CD4-positive, alpha-beta T cell (primary cell): ENCODE measurements at regions of chr16 and their contacts with region 1.

Region 1: DNA sequence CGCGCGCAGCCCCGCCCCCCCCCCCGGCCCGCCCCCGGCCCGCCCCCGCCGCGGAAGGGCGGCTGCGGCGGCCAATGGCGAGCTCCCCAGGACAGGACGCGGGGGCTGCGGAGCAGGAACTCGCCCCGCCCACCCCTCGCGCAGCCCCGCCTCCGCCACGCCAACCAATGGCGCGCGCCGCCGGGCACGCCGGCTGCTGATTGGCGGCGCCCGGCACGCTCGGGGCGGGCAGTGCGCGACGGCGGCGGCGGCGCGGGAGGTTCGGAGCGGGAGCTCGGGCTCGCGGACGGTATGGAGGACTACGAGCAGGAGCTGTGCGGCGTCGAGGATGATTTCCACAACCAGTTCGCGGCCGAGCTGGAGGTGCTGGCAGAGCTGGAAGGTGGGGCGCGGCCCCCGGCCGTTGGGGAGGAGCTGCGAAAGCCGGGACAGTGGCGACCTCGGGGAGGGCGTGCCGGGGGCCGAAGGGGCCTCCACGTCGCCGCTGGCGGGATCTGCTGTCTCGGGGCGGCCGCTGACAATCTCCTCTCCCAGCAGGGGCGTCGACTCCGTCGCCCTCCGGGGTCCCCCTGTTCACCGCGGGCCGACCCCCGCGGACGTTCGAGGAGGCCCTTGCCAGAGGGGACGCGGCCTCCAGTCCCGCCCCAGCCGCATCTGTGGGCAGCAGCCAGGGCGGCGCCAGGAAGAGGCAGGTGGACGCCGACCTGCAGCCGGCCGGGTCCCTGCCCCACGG is at the start of gene CHTF18:
- DNase-seq: peak; percentile 87 to 98 (median 94)
- ATAC-seq: peak; percentile 96
- H3K4me3 ChIP-seq: peak within 1 kb of the TSS; percentile 87
- H3K4me3 Mint-ChIP-seq: peak within 1 kb of the TSS; percentile 89
- H3K27ac ChIP-seq: peak within 1 kb of the TSS in 1 of 2 donors; percentile 35
- H3K27ac Mint-ChIP-seq: peak within 1 kb of the TSS; percentile 9
- H3K4me1 ChIP-seq: peaks cover 34% of the 10 kb centered on the region
- H3K4me1 Mint-ChIP-seq: no peaks in the 10 kb centered on the region
- H3K27me3 ChIP-seq: no peaks in the 10 kb centered on the region
- H3K27me3 Mint-ChIP-seq: no peaks in the 10 kb centered on the region
- CTCF ChIP-seq: no peak
- total RNA-seq, gene CHTF18: 30.7 to 31.1 TPM

Region 2: GRCh38 chr16:740764-741505 is 47.6 kb before region 1 on chr16 and contains the start of gene CIAO3:
- CTCF ChIA-PET with region 1: interaction called, 3 read pairs
- POLR2A ChIA-PET with region 1: interaction called, 7 read pairs
- intact Hi-C with region 1: loop called in 1 of 2 experiments (anchors 1 kb)
- DNase-seq: peak; percentile 83 to 96 (median 91)
- ATAC-seq: peak; percentile 94
- H3K4me3 ChIP-seq: peak within 1 kb of the TSS; percentile 88
- H3K4me3 Mint-ChIP-seq: peak within 1 kb of the TSS; percentile 83
- H3K27ac ChIP-seq: peak within 1 kb of the TSS; percentile 64 to 73
- H3K27ac Mint-ChIP-seq: peak within 1 kb of the TSS; percentile 62
- H3K4me1 ChIP-seq: peaks cover 20% of the 10 kb centered on the region
- H3K4me1 Mint-ChIP-seq: no peaks in the 10 kb centered on the region
- H3K27me3 ChIP-seq: no peaks in the 10 kb centered on the region
- H3K27me3 Mint-ChIP-seq: no peaks in the 10 kb centered on the region
- CTCF ChIP-seq: peak; percentile 97
- total RNA-seq, gene CIAO3: 33.3 to 38.2 TPM

Region 3: DNA sequence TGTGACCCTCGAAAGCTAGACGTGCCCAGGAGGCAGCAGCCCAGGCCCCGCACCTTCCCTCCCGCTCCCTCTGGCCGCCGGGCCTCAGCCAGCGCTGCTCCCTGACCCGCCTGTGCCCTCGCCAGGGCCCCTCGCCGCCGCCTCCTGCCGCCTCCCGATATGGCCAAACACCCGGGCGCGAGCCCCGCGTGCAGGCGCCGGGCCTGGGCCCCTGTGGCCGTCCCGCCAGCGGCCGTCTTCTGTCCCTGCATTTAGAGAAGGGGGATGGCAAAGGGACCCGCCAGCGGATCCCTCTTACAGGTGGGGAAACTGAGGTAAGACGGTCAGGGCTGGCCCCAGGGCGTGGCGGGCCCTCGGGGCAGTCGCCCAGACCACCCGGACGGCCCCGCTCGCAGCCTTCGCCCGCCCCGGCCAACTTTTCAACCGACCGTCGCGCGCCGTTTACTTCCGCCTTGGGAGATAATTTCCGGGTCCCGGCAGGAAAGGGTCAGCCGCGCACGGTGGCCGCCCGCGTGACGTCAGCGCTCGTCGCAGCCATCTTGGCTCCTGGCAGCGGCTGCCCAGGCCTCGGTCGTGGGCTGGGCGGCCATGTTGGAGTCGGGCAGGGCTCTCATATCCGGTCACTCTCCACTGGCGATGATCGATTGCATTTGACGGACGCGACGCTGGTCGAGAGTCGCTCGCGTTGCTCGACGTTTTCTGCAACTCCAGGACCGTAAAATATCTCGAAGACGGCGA is 19.0 kb after region 1 on chr16:
- CTCF ChIA-PET with region 1: no interaction called
- POLR2A ChIA-PET with region 1: interaction called, 14 read pairs
- intact Hi-C with region 1: loop called in 1 of 2 experiments (anchors 1 kb)
- DNase-seq: peak; percentile 58 to 92 (median 77)
- ATAC-seq: peak; percentile 83
- H3K4me3 ChIP-seq: peak overlapping the region; percentile 75
- H3K4me3 Mint-ChIP-seq: peak overlapping the region; percentile 95
- H3K27ac ChIP-seq: peak overlapping the region; percentile 72 to 87
- H3K27ac Mint-ChIP-seq: peak overlapping the region; percentile 92
- H3K4me1 ChIP-seq: peaks cover 21% of the 10 kb centered on the region
- H3K4me1 Mint-ChIP-seq: peaks cover 15% of the 10 kb centered on the region
- H3K27me3 ChIP-seq: peaks cover 4 to 12% of the 10 kb centered on the region in 2 experiments
- H3K27me3 Mint-ChIP-seq: peaks cover 13% of the 10 kb centered on the region
- CTCF ChIP-seq: no peak

Region 4: DNA sequence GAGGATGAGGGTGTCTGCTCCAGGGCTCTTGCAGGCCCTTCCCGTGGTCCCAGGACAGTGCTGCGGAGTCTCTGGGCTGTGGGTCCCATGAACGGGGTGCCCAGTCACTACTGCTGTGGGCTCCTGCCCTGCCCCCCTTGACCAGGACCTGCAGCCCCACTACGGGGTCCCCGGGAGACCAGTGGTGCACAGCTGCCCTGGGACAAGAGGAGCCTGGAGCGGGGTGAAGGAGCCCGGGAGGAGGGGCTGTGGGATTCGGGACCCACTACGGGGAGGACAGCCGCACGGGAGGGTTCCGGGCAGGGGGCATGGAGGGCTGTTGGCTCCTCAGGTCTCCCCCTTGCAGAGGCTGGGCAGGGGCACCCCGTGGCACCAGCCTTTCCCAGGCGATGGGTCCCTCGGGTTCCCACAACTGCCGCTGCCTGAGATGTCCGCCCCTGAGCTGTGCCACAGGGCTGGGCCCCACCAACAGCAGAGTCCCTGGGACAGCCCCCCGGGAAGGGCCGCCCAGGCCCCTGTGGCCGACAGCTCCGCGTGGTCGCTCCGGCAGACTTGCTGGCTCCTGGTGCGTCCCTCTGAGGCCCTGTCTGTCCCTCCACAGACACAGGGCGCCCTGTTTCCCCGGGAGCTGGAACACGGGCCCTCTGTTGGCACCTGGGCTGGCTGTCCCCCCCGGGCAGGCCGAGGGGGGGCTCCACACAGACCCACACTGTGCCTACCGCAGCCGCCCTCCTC is 64.1 kb after region 1 on chr16:
- CTCF ChIA-PET with region 1: no interaction called
- POLR2A ChIA-PET with region 1: no interaction called
- intact Hi-C with region 1: no loop called
- DNase-seq: no peak
- ATAC-seq: no peak
- H3K4me3 ChIP-seq: no peak overlapping the region
- H3K4me3 Mint-ChIP-seq: no peak overlapping the region
- H3K27ac ChIP-seq: no peak overlapping the region
- H3K27ac Mint-ChIP-seq: no peak overlapping the region
- H3K4me1 ChIP-seq: no peaks in the 10 kb centered on the region
- H3K4me1 Mint-ChIP-seq: no peaks in the 10 kb centered on the region
- H3K27me3 ChIP-seq: no peaks in the 10 kb centered on the region
- H3K27me3 Mint-ChIP-seq: no peaks in the 10 kb centered on the region
- CTCF ChIP-seq: no peak

Region 5: GRCh38 chr16:970766-971581 is 182.4 kb after region 1 on chr16 and contains the start of gene LMF1:
- CTCF ChIA-PET with region 1: no interaction called
- POLR2A ChIA-PET with region 1: no interaction called
- intact Hi-C with region 1: loop called in 1 of 2 experiments (anchors 1 kb)
- DNase-seq: peak; percentile 92 to 100 (median 96)
- ATAC-seq: peak; percentile 96
- H3K4me3 ChIP-seq: peak within 1 kb of the TSS; percentile 66
- H3K4me3 Mint-ChIP-seq: peak within 1 kb of the TSS; percentile 90
- H3K27ac ChIP-seq: peak within 1 kb of the TSS; percentile 44 to 53
- H3K27ac Mint-ChIP-seq: peak within 1 kb of the TSS; percentile 66
- H3K4me1 ChIP-seq: peaks cover 30% of the 10 kb centered on the region
- H3K4me1 Mint-ChIP-seq: peaks cover 27% of the 10 kb centered on the region
- H3K27me3 ChIP-seq: no peaks in the 10 kb centered on the region
- H3K27me3 Mint-ChIP-seq: no peaks in the 10 kb centered on the region
- CTCF ChIP-seq: no peak
- total RNA-seq, gene LMF1: 26.8 to 27.6 TPM